Transverse colon (tissue), 4 donors: ENCODE measurements at regions of chr17 and their contacts with region 1.

Region 1: DNA sequence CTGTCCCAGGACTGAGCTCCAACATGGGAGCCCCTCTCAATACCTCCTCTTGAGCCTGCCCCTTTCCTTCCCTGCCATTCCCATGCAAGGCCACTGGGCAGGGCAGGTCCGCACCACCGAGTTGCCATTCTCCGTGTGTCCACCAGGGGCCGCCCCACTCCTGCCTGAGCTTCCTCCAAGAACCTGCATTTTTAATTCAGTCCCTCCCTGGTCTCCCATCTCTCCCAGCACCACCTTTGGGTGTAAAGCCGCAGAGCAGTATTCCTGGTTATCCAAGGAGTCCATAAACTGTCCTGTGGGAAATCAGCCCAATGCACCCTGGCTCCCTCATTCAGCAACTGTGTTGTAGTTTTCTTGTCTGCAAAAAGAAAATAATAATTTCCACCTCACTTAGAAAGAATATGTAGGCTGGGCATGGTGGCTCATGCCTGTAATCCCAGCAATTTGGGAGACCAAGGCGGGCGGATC is 15.9 kb upstream of the ANKRD40CL start:
- DNase-seq: peak; percentile 91
- H3K4me3 ChIP-seq: no peak overlapping the region
- H3K27ac ChIP-seq: no peak overlapping the region
- H3K4me1 ChIP-seq: peaks cover 0 to 8% (median 3%) of the 10 kb centered on the region in 4 donors
- H3K27me3 ChIP-seq: no peaks in the 10 kb centered on the region
- CTCF ChIP-seq: peak; percentile 99 to 100 (median 100)
- EP300 ChIP-seq: no peak
- POLR2A ChIP-seq: no peak

Region 2: DNA sequence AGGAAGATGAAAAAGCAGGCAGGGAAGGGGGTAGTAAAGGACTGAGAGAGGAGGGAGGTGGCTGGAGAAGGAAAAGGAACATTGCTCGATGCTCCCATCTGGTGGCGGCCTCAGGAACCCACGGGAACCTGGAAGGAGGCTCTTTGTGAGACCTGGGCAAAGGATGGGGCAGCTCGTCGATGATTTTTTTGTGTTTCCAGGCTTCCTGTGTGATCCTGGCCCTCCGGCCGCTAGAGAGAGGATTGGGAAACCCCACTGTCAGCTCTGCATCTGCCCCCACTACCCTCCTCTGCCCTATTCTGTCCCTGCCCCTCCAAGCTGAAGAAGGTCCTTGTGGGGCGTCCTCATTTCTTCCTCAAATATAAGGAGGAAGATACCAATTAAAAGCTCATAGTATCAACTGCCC is 58.7 kb after region 1 on chr17:
- in situ Hi-C with region 1: loop called (anchors 5 to 10 kb)
- intact Hi-C with region 1: loop called (anchors 5 kb)
- DNase-seq: peak; percentile 82
- H3K4me3 ChIP-seq: no peak overlapping the region
- H3K27ac ChIP-seq: no peak overlapping the region
- H3K4me1 ChIP-seq: no peaks in the 10 kb centered on the region
- H3K27me3 ChIP-seq: no peaks in the 10 kb centered on the region
- CTCF ChIP-seq: peak; percentile 70 to 90 (median 80)
- EP300 ChIP-seq: no peak
- POLR2A ChIP-seq: no peak

Region 3: DNA sequence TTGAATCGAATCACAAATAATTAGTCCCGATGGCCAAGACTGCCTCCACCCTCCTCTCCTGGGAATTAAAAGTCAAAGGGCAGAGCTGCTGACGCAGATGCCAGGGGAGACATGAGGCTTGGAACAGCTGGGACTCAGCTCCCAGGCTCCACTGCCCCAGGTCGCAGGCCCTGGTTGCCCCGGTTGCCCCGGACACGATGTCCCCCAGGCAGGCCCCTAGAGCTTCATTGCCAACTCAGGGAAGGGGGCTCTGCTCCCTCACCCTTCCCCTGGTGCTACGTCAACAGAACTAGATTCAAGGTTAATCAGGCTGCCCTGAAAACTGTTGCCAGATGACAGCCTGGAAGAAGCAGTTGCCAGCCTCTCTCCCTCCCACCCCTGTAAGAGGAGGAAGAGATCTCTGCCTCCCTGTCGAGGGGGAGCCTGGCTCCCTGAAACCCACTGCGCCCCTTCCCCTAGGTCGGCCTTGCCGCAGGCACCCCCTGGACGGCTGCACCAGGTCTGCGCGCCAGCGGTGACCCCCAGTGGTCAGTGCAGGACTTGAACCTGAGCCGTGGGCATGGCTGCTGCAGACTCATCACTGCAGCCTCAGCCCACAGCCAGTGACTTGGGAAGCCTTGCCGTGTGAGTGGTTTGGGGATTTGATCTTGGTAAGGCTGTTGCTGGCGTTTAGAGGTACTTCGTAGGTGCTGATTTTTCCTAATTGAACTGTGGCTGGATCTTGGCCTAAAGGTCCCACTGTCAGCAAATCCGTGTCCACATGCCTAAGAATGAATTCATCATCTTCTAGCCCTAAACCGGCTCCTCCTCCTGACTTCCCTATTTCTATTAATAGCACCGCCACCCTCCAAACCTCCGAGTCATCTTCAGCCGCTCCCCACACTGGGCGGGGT is 167.0 kb after region 1 on chr17:
- in situ Hi-C with region 1: loop called in 3 of 4 experiments (anchors 10 kb)
- intact Hi-C with region 1: loop called (anchors 5 kb)
- DNase-seq: peak; percentile 81
- H3K4me3 ChIP-seq: peak overlapping the region in 1 of 4 donors; percentile 2
- H3K27ac ChIP-seq: peak overlapping the region; percentile 76 to 94 (median 91)
- H3K4me1 ChIP-seq: peaks cover 23 to 68% (median 53%) of the 10 kb centered on the region in 4 donors
- H3K27me3 ChIP-seq: no peaks in the 10 kb centered on the region
- CTCF ChIP-seq: peak; percentile 68 to 96 (median 83)
- EP300 ChIP-seq: peak; percentile 64
- POLR2A ChIP-seq: peak; percentile 46